ENCODE measurements at regions of chr3 and their contacts with region 1.

Region 1: DNA sequence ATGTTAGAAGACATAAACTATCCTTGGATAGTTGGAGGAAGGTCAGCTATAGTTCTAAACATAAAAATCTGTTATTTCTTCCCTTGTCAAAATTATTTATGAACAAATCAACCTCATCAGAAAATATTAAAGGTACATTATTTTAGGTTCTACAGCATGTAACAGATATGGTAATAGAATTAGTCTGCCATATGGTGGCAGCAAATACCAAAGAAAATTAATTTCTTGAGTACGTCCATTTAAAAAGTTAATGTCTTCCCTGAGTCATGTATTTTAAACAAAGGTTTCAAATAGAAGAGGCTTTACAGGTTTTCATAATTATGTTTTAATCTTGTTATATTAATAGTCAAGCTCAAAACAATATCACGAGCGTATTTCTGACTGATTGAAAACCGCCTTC is 17.9 kb upstream of the ANKRD28 start:
- DNase-seq: no peak
- ATAC-seq: peak in 5 of 8 donors; percentile 52 to 74 (median 69)
- H3K4me3 ChIP-seq: no peak overlapping the region
- H3K27ac ChIP-seq: no peak overlapping the region
- H3K4me1 ChIP-seq: peaks cover 0 to 23% (median 8%) of the 10 kb centered on the region in 9 donors
- H3K27me3 ChIP-seq: no peaks in the 10 kb centered on the region
- CTCF ChIP-seq: peak; percentile 5 to 77 (median 55)

Region 2: DNA sequence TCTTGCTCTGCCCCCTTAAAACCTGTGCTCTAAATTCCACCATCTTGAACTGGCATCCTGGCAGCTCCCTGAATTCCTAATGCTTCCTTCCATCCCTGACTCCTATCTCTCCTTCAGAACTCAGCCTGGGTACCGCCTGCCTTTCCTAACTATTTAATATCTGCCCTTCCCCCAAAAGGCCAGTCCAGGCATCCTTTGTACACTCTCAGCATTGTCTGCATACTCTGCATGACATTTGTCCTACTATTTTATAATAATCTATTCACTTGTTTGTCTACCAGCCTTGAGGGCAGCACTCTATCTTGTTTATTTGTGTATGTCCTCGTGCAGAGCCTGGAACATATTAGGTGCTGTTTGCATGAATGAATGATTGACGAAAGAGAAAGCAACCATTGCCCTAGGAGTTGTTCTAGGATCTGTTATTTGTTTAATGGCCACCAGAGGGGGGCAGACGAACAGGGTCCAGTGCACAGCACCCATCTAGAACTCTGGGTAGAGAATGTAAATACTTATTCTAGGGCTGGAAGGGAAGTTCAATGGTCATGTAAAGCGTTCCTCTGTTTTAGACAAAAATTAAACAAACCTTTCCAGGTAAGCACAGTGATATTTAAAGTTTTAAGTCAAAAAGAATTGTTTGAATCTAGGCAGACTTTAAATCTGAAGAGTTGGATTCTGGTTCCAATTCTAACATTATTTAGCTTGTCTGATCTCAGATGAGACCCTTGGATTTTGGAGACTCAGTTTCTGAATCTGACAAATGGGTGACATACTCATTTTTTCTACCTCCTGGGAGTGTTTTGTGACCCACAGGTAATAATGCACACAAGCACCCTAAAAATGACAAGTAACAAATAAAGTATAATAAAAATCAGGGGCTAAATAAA is 233.0 kb after region 1 on chr3:
- intact Hi-C with region 1: loop called in 8 of 10 experiments (anchors 5 to 10 kb)
- DNase-seq: peak in 1 of 2 donors; percentile 68
- ATAC-seq: peak; percentile 75 to 89 (median 85)
- H3K4me3 ChIP-seq: peak overlapping the region in 2 of 10 donors; percentile 9 to 33
- H3K27ac ChIP-seq: peak overlapping the region in 1 of 10 donors; percentile 15
- H3K4me1 ChIP-seq: peaks cover 0 to 39% (median 15%) of the 10 kb centered on the region in 9 donors
- H3K27me3 ChIP-seq: no peaks in the 10 kb centered on the region
- CTCF ChIP-seq: peak; percentile 78 to 92 (median 83)

Region 3: DNA sequence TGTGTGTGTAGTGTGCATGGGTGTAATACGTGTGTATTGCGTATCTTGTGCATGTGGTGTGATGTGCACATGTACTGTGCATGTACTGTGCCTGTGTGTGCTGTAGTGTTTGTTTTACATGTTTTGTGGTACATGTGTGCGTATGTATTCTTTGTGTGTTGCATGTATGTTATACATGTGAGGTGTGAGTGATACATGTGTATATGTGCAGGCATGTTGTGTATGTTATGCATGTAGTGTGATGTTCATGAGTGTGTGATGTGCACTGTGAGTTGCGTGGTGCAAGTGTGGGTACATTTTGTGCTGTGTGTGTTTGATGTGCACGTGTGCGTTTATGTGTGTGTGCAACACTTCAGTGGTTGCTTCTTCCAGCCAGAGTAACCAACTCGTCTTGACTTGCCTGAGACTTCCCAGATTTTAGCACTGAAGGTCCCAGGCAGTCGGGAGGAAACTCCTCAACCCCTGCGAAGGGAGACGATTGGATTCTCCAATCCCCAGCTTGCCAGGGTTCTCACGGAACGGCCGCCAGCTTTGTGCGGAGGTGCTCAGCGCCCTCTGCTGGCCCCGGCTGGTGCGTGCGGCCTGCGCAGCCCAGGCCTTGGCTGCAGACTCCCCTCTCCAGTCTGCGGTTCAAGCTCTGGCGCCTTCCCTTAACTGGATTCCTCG is 362.4 kb after region 1 on chr3:
- intact Hi-C with region 1: loop called (anchors 2 to 10 kb)
- DNase-seq: peak; percentile 72 to 86
- ATAC-seq: peak; percentile 73 to 83 (median 78)
- H3K4me3 ChIP-seq: peak overlapping the region in 6 of 10 donors; percentile 23 to 42 (median 36)
- H3K27ac ChIP-seq: no peak overlapping the region
- H3K4me1 ChIP-seq: peaks cover 0 to 58% (median 35%) of the 10 kb centered on the region in 9 donors
- H3K27me3 ChIP-seq: peaks cover 0 to 7% (median 0%) of the 10 kb centered on the region in 7 donors
- CTCF ChIP-seq: peak; percentile 94 to 99 (median 98)

Region 4: DNA sequence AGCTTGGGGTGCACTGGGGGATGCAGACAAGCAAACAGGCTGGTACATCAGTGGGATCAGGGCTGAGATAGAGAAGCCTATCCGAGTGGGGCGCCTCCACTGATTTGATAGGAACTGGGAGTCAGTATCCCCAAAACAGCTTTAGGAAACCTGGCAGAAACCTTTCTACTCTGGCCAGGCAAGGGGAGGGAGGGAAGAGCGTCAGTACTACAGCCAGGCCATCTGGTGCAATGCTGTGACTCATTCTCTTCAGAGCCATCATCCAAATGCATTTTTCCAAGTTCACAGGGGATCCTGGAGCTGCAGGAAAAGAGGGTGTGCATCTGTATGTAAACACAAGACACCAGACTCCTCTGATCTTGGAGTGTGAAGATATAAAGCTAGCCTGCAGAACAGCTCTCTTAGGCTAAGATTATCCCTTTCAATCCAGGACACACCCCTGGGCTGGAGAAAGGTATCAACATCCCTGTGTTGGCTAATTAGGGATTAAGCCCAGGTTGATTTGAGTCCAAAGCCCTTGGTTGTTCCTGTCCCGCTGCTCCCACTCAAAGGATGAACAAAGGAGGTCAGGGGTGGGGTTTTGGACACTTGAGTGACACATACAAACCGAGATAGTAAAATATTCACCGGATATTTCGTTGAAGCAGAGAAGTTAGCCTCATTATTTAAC is 368.0 kb after region 1 on chr3:
- intact Hi-C with region 1: loop called (anchors 2 to 10 kb)
- DNase-seq: no peak
- ATAC-seq: peak in 7 of 8 donors; percentile 29 to 68 (median 60)
- H3K4me3 ChIP-seq: no peak overlapping the region
- H3K27ac ChIP-seq: no peak overlapping the region
- H3K4me1 ChIP-seq: peaks cover 0 to 17% (median 1%) of the 10 kb centered on the region in 9 donors
- H3K27me3 ChIP-seq: no peaks in the 10 kb centered on the region
- CTCF ChIP-seq: no peak

Region 5: GRCh38 chr3:16240283-16241023 is 424.8 kb after region 1 on chr3:
- intact Hi-C with region 1: loop called in 5 of 10 experiments (anchors 2 to 5 kb)
- DNase-seq: no peak
- ATAC-seq: no peak
- H3K4me3 ChIP-seq: no peak overlapping the region
- H3K27ac ChIP-seq: peak overlapping the region in 1 of 10 donors; percentile 49
- H3K4me1 ChIP-seq: peaks cover 0 to 53% (median 35%) of the 10 kb centered on the region in 9 donors
- H3K27me3 ChIP-seq: no peaks in the 10 kb centered on the region
- CTCF ChIP-seq: no peak

Region 6: GRCh38 chr3:16247276-16248061 is 431.8 kb after region 1 on chr3:
- intact Hi-C with region 1: loop called (anchors 2 to 5 kb)
- DNase-seq: peak; percentile 63 to 84
- ATAC-seq: peak; percentile 24 to 83 (median 72)
- H3K4me3 ChIP-seq: no peak overlapping the region
- H3K27ac ChIP-seq: no peak overlapping the region
- H3K4me1 ChIP-seq: peaks cover 0 to 27% (median 16%) of the 10 kb centered on the region in 9 donors
- H3K27me3 ChIP-seq: no peaks in the 10 kb centered on the region
- CTCF ChIP-seq: peak; percentile 85 to 98 (median 94)